ENCODE measurements at regions of chr15 and their contacts with region 1.

Region 1: GRCh38 chr15:29233566-29233965 is 36.1 kb downstream of the NSMCE3 start:
- DNase-seq: no peak
- ATAC-seq: no peak
- H3K4me3 Mint-ChIP-seq: no peak overlapping the region
- H3K27ac Mint-ChIP-seq: no peak overlapping the region
- H3K4me1 Mint-ChIP-seq: no peaks in the 10 kb centered on the region
- H3K27me3 Mint-ChIP-seq: peaks cover 27% of the 10 kb centered on the region

Region 2: DNA sequence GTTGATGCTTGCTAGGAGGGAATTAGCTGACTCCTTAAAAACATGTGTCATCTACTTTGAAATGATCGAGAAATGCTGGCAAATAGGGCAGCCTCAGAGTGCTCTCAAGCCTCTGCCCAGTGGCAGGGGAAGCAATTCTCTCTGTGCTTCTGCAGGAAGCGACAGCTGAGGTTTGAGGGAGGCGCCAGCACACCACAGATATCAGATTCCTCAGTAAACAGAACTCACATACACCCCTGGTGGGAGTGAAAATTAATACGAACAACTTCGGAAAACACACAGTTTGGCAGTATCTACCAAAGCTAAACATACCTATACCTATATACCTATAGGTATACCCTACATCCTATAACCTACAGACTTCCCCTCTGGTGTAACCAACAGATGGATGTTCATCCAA is 25.2 kb before region 1 on chr15:
- CTCF ChIA-PET with region 1: no interaction called
- POLR2A ChIA-PET with region 1: no interaction called
- intact Hi-C with region 1: loop called in 1 of 2 experiments (anchors 2 kb)
- DNase-seq: no peak
- ATAC-seq: no peak
- H3K4me3 Mint-ChIP-seq: no peak overlapping the region
- H3K27ac Mint-ChIP-seq: no peak overlapping the region
- H3K4me1 Mint-ChIP-seq: no peaks in the 10 kb centered on the region
- H3K27me3 Mint-ChIP-seq: peaks cover 16% of the 10 kb centered on the region

Region 3: GRCh38 chr15:29291067-29291845 is 57.7 kb after region 1 on chr15:
- CTCF ChIA-PET with region 1: no interaction called
- POLR2A ChIA-PET with region 1: no interaction called
- intact Hi-C with region 1: no loop called
- DNase-seq: no peak
- ATAC-seq: no peak
- H3K4me3 Mint-ChIP-seq: no peak overlapping the region
- H3K27ac Mint-ChIP-seq: no peak overlapping the region
- H3K4me1 Mint-ChIP-seq: no peaks in the 10 kb centered on the region
- H3K27me3 Mint-ChIP-seq: peaks cover 17% of the 10 kb centered on the region

Region 4: GRCh38 chr15:29424118-29424517 is 190.6 kb after region 1 on chr15:
- CTCF ChIA-PET with region 1: no interaction called
- POLR2A ChIA-PET with region 1: no interaction called
- intact Hi-C with region 1: no loop called
- DNase-seq: no peak
- ATAC-seq: no peak
- H3K4me3 Mint-ChIP-seq: no peak overlapping the region
- H3K27ac Mint-ChIP-seq: no peak overlapping the region
- H3K4me1 Mint-ChIP-seq: no peaks in the 10 kb centered on the region
- H3K27me3 Mint-ChIP-seq: peaks cover 5% of the 10 kb centered on the region